Caco-2 (cell line): ENCODE measurements at regions of chr5 and their contacts with region 1.

Region 1: GRCh38 chr5:169701910-169702451 is 64.9 kb downstream of the DOCK2 start:
- DNase-seq: peak in 1 of 2 experiments; percentile 27
- H3K4me3 ChIP-seq: no peak overlapping the region
- H3K4me3 Mint-ChIP-seq: no peak overlapping the region
- H3K27ac Mint-ChIP-seq: no peak overlapping the region
- H3K4me1 ChIP-seq: no peaks in the 10 kb centered on the region
- H3K4me1 Mint-ChIP-seq: no peaks in the 10 kb centered on the region
- H3K27me3 ChIP-seq: 0 out of 2 replicates have a peak, but pooled peaks cover 1% of the 10 kb centered on the region
- H3K27me3 Mint-ChIP-seq: peaks cover 3% of the 10 kb centered on the region
- CTCF ChIP-seq: peak; percentile 53 to 54

Region 2: GRCh38 chr5:169367861-169368260 is 334.1 kb before region 1 on chr5:
- CTCF ChIA-PET with region 1: no interaction called
- POLR2A ChIA-PET with region 1: no interaction called
- intact Hi-C with region 1: no loop called
- DNase-seq: no peak
- H3K4me3 ChIP-seq: no peak overlapping the region
- H3K4me3 Mint-ChIP-seq: no peak overlapping the region
- H3K27ac Mint-ChIP-seq: no peak overlapping the region
- H3K4me1 ChIP-seq: no peaks in the 10 kb centered on the region
- H3K4me1 Mint-ChIP-seq: no peaks in the 10 kb centered on the region
- H3K27me3 ChIP-seq: no peaks in the 10 kb centered on the region
- H3K27me3 Mint-ChIP-seq: no peaks in the 10 kb centered on the region
- CTCF ChIP-seq: no peak

Region 3: DNA sequence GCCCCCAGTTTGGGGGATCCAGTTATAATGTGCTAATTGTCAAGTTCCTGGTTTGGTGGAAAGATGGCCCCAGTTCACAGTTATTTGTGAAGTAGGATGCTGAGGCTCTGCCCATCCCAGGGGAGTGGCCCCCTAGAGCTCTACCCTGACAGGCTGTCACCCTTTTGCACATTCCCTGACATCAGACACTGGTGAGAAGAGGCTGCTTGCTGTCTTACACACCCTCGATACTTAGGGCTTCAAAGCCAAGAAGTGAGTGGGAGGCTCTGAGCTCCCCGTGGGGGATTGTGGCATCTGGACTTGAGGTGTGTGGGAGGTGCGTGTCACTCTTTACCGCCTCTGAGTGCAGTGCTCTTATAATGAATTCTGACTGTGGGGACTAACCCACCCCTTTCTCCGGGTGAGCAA is 103.5 kb after region 1 on chr5:
- CTCF ChIA-PET with region 1: no interaction called
- POLR2A ChIA-PET with region 1: no interaction called
- intact Hi-C with region 1: no loop called
- DNase-seq: no peak
- H3K4me3 ChIP-seq: no peak overlapping the region
- H3K4me3 Mint-ChIP-seq: no peak overlapping the region
- H3K27ac Mint-ChIP-seq: no peak overlapping the region
- H3K4me1 ChIP-seq: peaks cover 16% of the 10 kb centered on the region
- H3K4me1 Mint-ChIP-seq: peaks cover 28% of the 10 kb centered on the region
- H3K27me3 ChIP-seq: no peaks in the 10 kb centered on the region
- H3K27me3 Mint-ChIP-seq: no peaks in the 10 kb centered on the region
- CTCF ChIP-seq: no peak

Region 4: GRCh38 chr5:169826618-169827017 is 124.6 kb after region 1 on chr5:
- CTCF ChIA-PET with region 1: interaction called, 4 read pairs
- POLR2A ChIA-PET with region 1: no interaction called
- intact Hi-C with region 1: loop called (anchors 5 kb)
- DNase-seq: no peak
- H3K4me3 ChIP-seq: no peak overlapping the region
- H3K4me3 Mint-ChIP-seq: no peak overlapping the region
- H3K27ac Mint-ChIP-seq: no peak overlapping the region
- H3K4me1 ChIP-seq: no peaks in the 10 kb centered on the region
- H3K4me1 Mint-ChIP-seq: no peaks in the 10 kb centered on the region
- H3K27me3 ChIP-seq: no peaks in the 10 kb centered on the region
- H3K27me3 Mint-ChIP-seq: peaks cover 5% of the 10 kb centered on the region
- CTCF ChIP-seq: peak in 1 of 2 experiments; percentile 5

Region 5: DNA sequence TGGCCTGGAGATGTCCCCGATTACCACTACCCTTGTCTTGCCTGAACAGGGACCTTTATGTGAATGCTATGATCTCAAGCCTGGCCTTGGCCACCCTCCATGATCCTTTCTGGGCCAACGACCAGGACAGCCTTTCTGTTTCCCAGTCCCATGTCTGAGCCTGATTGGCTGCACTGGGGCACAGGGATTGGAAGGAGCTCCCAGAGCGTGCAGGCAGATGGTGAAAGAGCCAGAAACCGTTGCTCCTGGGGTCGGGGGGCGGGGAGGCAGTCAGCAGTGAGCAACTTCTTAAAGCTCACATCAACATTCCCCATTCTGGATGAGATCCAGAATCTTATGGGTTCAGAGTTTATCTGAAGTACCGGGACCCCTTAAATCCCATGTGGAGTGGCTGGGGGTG is 193.9 kb after region 1 on chr5:
- CTCF ChIA-PET with region 1: no interaction called
- POLR2A ChIA-PET with region 1: no interaction called
- intact Hi-C with region 1: loop called (anchors 10 kb)
- DNase-seq: no peak
- H3K4me3 ChIP-seq: no peak overlapping the region
- H3K4me3 Mint-ChIP-seq: no peak overlapping the region
- H3K27ac Mint-ChIP-seq: no peak overlapping the region
- H3K4me1 ChIP-seq: no peaks in the 10 kb centered on the region
- H3K4me1 Mint-ChIP-seq: no peaks in the 10 kb centered on the region
- H3K27me3 ChIP-seq: no peaks in the 10 kb centered on the region; the same call in 1 of the 2 replicates
- H3K27me3 Mint-ChIP-seq: peaks cover 9% of the 10 kb centered on the region
- CTCF ChIP-seq: no peak

Region 6: GRCh38 chr5:169906745-169907649 is 205.0 kb after region 1 on chr5:
- CTCF ChIA-PET with region 1: no interaction called
- POLR2A ChIA-PET with region 1: no interaction called
- intact Hi-C with region 1: no loop called
- DNase-seq: no peak
- H3K4me3 ChIP-seq: no peak overlapping the region
- H3K4me3 Mint-ChIP-seq: no peak overlapping the region
- H3K27ac Mint-ChIP-seq: no peak overlapping the region
- H3K4me1 ChIP-seq: no peaks in the 10 kb centered on the region; the same call in 1 of the 2 replicates
- H3K4me1 Mint-ChIP-seq: no peaks in the 10 kb centered on the region
- H3K27me3 ChIP-seq: no peaks in the 10 kb centered on the region
- H3K27me3 Mint-ChIP-seq: no peaks in the 10 kb centered on the region
- CTCF ChIP-seq: no peak

Region 7: GRCh38 chr5:169980418-169981053 is 278.6 kb after region 1 on chr5 and contains the start of gene INSYN2B:
- CTCF ChIA-PET with region 1: interaction called, 44 read pairs
- POLR2A ChIA-PET with region 1: no interaction called
- intact Hi-C with region 1: loop called (anchors 1 kb)
- DNase-seq: peak; percentile 70 to 76
- H3K4me3 ChIP-seq: no peak within 1 kb of the TSS
- H3K4me3 Mint-ChIP-seq: peak within 1 kb of the TSS; percentile 7
- H3K27ac Mint-ChIP-seq: no peak within 1 kb of the TSS
- H3K4me1 ChIP-seq: 0 out of 2 replicates have a peak, but pooled peaks cover 4% of the 10 kb centered on the region
- H3K4me1 Mint-ChIP-seq: no peaks in the 10 kb centered on the region
- H3K27me3 ChIP-seq: no peaks in the 10 kb centered on the region
- H3K27me3 Mint-ChIP-seq: peaks cover 14% of the 10 kb centered on the region
- CTCF ChIP-seq: peak; percentile 64 to 66
- total RNA-seq, gene INSYN2B: 0.09 TPM in 1 of 2 replicates, not detected in the other

Region 8: GRCh38 chr5:170070556-170071412 is 368.8 kb after region 1 on chr5:
- CTCF ChIA-PET with region 1: interaction called, 11 read pairs
- POLR2A ChIA-PET with region 1: no interaction called
- intact Hi-C with region 1: loop called (anchors 1 kb)
- DNase-seq: peak in 1 of 2 experiments; percentile 60
- H3K4me3 ChIP-seq: no peak overlapping the region
- H3K4me3 Mint-ChIP-seq: no peak overlapping the region
- H3K27ac Mint-ChIP-seq: no peak overlapping the region
- H3K4me1 ChIP-seq: no peaks in the 10 kb centered on the region
- H3K4me1 Mint-ChIP-seq: no peaks in the 10 kb centered on the region
- H3K27me3 ChIP-seq: no peaks in the 10 kb centered on the region; the same call in 1 of the 2 replicates
- H3K27me3 Mint-ChIP-seq: peaks cover 17% of the 10 kb centered on the region
- CTCF ChIP-seq: peak; percentile 76 to 94